CD14-positive monocyte (primary cell): ENCODE measurements at regions of chr4 and their contacts with region 1.

Region 1: GRCh38 chr4:140720387-140721304 is 35.5 kb downstream of the TBC1D9 start:
- DNase-seq: peak in 2 of 3 donors; percentile 27 to 42
- H3K4me3 ChIP-seq: peak overlapping the region; percentile 9 to 69 (median 23)
- H3K4me3 Mint-ChIP-seq: peak overlapping the region; percentile 70 to 86
- H3K27ac ChIP-seq: peak overlapping the region; percentile 93 to 97
- H3K27ac Mint-ChIP-seq: peak overlapping the region; percentile 95 to 99 (median 97)
- H3K4me1 ChIP-seq: peaks cover 55 to 73% of the 10 kb centered on the region in 2 donors
- H3K4me1 Mint-ChIP-seq: peaks cover 70% of the 10 kb centered on the region
- H3K27me3 ChIP-seq: no peaks in the 10 kb centered on the region
- H3K27me3 Mint-ChIP-seq: no peaks in the 10 kb centered on the region
- CTCF ChIP-seq: no peak

Region 2: GRCh38 chr4:139453371-139454110 is 1267.1 kb before region 1 on chr4:
- intact Hi-C with region 1: loop called in 1 of 2 experiments (anchors 10 kb)
- DNase-seq: peak; percentile 93 to 97 (median 94)
- H3K4me3 ChIP-seq: peak overlapping the region; percentile 74 to 98 (median 94)
- H3K4me3 Mint-ChIP-seq: peak overlapping the region; percentile 96 to 98
- H3K27ac ChIP-seq: peak overlapping the region; percentile 94 to 95
- H3K27ac Mint-ChIP-seq: peak overlapping the region; percentile 95 to 99 (median 98)
- H3K4me1 ChIP-seq: peaks cover 30 to 48% of the 10 kb centered on the region in 2 donors
- H3K4me1 Mint-ChIP-seq: peaks cover 61% of the 10 kb centered on the region
- H3K27me3 ChIP-seq: no peaks in the 10 kb centered on the region
- H3K27me3 Mint-ChIP-seq: peaks cover 0 to 1% (median 0%) of the 10 kb centered on the region in 3 donors
- CTCF ChIP-seq: peak; percentile 30

Region 3: GRCh38 chr4:140790765-140791164 is 70.1 kb after region 1 on chr4:
- intact Hi-C with region 1: loop called in 1 of 2 experiments (anchors 2 kb)
- DNase-seq: peak; percentile 93 to 95 (median 95)
- H3K4me3 ChIP-seq: peak overlapping the region in 1 of 3 experiments; percentile 42
- H3K4me3 Mint-ChIP-seq: peak overlapping the region in 1 of 2 donors; percentile 16
- H3K27ac ChIP-seq: peak overlapping the region; percentile 97 to 98
- H3K27ac Mint-ChIP-seq: peak overlapping the region; percentile 91 to 99 (median 97)
- H3K4me1 ChIP-seq: peaks cover 38 to 43% of the 10 kb centered on the region in 2 donors
- H3K4me1 Mint-ChIP-seq: peaks cover 48% of the 10 kb centered on the region
- H3K27me3 ChIP-seq: no peaks in the 10 kb centered on the region
- H3K27me3 Mint-ChIP-seq: peaks cover 0 to 3% (median 0%) of the 10 kb centered on the region in 3 donors
- CTCF ChIP-seq: no peak

Region 4: GRCh38 chr4:140982613-140983340 is 262.1 kb after region 1 on chr4:
- intact Hi-C with region 1: no loop called
- DNase-seq: no peak
- H3K4me3 ChIP-seq: no peak overlapping the region
- H3K4me3 Mint-ChIP-seq: no peak overlapping the region
- H3K27ac ChIP-seq: no peak overlapping the region
- H3K27ac Mint-ChIP-seq: no peak overlapping the region
- H3K4me1 ChIP-seq: no peaks in the 10 kb centered on the region
- H3K4me1 Mint-ChIP-seq: no peaks in the 10 kb centered on the region
- H3K27me3 ChIP-seq: no peaks in the 10 kb centered on the region
- H3K27me3 Mint-ChIP-seq: no peaks in the 10 kb centered on the region
- CTCF ChIP-seq: no peak